Endothelial cell of umbilical vein (primary cell): ENCODE measurements at regions of chr7 and their contacts with region 1.

Region 1: GRCh38 chr7:135801045-135801693 is 52.6 kb upstream of the FAM180A start:
- DNase-seq: peak; percentile 66
- H3K4me3 ChIP-seq: no peak overlapping the region
- H3K27ac ChIP-seq: no peak overlapping the region
- H3K4me1 ChIP-seq: no peaks in the 10 kb centered on the region
- H3K27me3 ChIP-seq: peaks cover 0 to 3% of the 10 kb centered on the region in 2 experiments
- CTCF ChIP-seq: peak; percentile 63 to 70
- POLR2A ChIP-seq: no peak

Region 2: DNA sequence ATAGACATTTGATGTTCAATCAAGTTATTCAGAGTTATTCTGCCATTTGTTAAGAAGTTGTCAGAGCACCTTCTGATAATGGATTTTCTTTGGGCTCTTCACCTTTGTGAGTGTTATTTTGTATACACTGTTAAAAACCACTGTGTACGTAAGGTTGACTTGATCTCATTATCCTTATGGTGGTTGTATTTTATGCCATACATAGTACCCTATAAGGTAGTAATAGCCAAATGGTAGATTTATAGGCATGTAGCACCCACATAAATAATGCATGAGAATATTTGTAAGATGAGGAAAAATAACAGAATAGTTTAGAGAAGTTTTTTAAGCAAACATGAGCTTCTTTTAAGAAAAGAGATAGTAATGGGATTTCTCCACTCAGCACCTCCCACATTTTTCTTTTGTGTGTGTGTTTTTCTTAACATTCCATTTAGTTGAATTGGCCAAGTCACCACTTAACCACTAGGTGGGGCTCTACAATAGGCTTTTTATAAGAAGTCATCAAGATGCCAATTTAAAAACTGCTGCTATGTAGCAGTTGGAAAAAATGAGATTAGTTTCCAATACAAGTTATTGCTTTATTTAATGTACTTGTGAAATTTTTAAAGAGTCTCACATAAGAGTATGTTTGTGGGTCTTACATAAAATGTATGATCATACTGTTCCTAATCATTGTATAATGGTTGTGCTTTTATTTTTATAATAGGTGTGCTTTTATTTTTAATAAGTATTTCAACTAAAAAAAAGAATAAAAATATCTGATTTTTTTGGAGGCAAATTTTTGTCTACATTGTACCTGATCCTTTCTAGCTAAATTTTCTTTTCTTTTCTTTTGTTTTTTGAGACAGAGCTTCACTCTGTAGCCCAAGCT is 180.0 kb before region 1 on chr7:
- CTCF ChIA-PET with region 1: no interaction called
- POLR2A ChIA-PET with region 1: no interaction called
- dilution Hi-C with region 1: no loop called
- intact Hi-C with region 1: loop called (anchors 2 kb)
- DNase-seq: peak; percentile 82
- H3K4me3 ChIP-seq: no peak overlapping the region
- H3K27ac ChIP-seq: no peak overlapping the region
- H3K4me1 ChIP-seq: no peaks in the 10 kb centered on the region
- H3K27me3 ChIP-seq: no peaks in the 10 kb centered on the region
- CTCF ChIP-seq: peak; percentile 64 to 69
- POLR2A ChIP-seq: no peak

Region 3: GRCh38 chr7:135950972-135951371 is 149.8 kb after region 1 on chr7:
- CTCF ChIA-PET with region 1: no interaction called
- POLR2A ChIA-PET with region 1: no interaction called
- dilution Hi-C with region 1: no loop called
- intact Hi-C with region 1: no loop called
- DNase-seq: no peak
- H3K4me3 ChIP-seq: no peak overlapping the region
- H3K27ac ChIP-seq: no peak overlapping the region
- H3K4me1 ChIP-seq: no peaks in the 10 kb centered on the region
- H3K27me3 ChIP-seq: no peaks in the 10 kb centered on the region
- CTCF ChIP-seq: no peak
- POLR2A ChIP-seq: no peak

Region 4: GRCh38 chr7:136009488-136010079 is 208.4 kb after region 1 on chr7:
- CTCF ChIA-PET with region 1: interaction called, 53 read pairs
- POLR2A ChIA-PET with region 1: no interaction called
- dilution Hi-C with region 1: no loop called
- intact Hi-C with region 1: loop called (anchors 1 kb)
- DNase-seq: peak; percentile 62
- H3K4me3 ChIP-seq: no peak overlapping the region
- H3K27ac ChIP-seq: no peak overlapping the region
- H3K4me1 ChIP-seq: no peaks in the 10 kb centered on the region
- H3K27me3 ChIP-seq: peaks cover 0 to 5% of the 10 kb centered on the region in 2 experiments
- CTCF ChIP-seq: peak; percentile 29 to 40
- POLR2A ChIP-seq: no peak

Region 5: GRCh38 chr7:136114966-136115762 is 314.0 kb after region 1 on chr7:
- CTCF ChIA-PET with region 1: interaction called, 3 read pairs
- POLR2A ChIA-PET with region 1: no interaction called
- dilution Hi-C with region 1: no loop called
- intact Hi-C with region 1: loop called (anchors 1 kb)
- DNase-seq: peak; percentile 39
- H3K4me3 ChIP-seq: no peak overlapping the region
- H3K27ac ChIP-seq: no peak overlapping the region
- H3K4me1 ChIP-seq: no peaks in the 10 kb centered on the region
- H3K27me3 ChIP-seq: no peaks in the 10 kb centered on the region
- CTCF ChIP-seq: peak; percentile 74 to 78
- POLR2A ChIP-seq: no peak

Region 6: DNA sequence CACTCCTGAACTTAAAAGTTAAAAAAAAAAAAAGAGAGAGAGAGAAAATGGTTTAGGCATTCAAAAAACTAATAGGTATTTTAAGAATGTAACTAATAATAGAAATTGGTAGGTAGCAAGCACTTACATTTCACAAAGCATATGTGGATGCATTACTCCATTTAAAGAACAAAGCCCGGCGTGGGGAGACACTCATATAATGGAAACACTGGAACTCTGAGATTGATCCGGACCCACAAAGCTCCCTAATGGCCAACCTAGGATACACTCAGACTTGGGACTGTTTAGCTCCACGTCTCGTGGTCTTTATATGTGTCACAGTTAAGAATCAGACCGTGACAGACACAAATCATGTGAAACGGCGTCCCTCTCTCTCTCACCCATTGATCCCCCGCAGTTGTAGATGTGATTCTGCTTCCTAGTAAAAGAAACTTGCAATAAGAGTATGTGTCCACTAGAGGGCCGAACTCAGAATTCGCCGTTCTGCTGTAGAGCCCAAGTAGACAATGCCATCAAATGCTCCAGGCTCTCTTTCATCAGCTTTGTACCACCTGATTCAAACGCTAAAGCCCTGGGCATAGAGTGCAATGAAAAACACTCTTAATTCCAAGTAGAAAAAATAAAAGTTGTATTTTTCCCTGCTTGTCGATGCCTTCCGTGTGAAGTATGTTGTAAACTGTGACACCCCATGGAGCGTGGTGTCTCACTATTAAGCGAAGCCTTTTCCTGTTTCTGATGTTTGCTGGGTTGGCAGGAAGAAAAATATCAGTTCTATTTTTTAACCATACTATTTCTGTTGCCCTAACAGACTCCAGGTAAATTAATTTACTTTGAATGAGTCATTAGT is 605.0 kb after region 1 on chr7:
- CTCF ChIA-PET with region 1: no interaction called
- POLR2A ChIA-PET with region 1: no interaction called
- dilution Hi-C with region 1: no loop called
- intact Hi-C with region 1: loop called (anchors 5 kb)
- DNase-seq: peak; percentile 48
- H3K4me3 ChIP-seq: no peak overlapping the region
- H3K27ac ChIP-seq: no peak overlapping the region
- H3K4me1 ChIP-seq: no peaks in the 10 kb centered on the region
- H3K27me3 ChIP-seq: no peaks in the 10 kb centered on the region
- CTCF ChIP-seq: peak; percentile 55 to 67
- POLR2A ChIP-seq: no peak

Region 7: DNA sequence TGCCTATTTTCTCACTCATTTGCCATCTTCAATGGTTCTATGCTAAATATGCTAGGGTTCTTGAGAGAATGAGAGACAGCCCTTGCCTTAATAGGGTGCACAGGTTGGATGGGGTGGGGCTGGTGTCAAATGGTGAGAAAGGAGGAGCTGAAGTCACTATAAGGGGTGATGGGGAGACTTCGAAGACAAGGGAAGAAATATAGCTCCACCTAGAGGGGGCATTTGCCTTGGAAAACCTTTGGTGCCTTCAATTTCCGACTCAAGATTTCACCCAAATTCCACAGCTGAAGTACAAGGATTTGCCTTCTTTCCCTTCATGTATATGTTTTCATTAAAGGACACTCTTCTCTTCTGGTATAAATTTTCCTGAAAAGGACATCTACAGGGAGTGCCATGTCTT is 1536.7 kb after region 1 on chr7:
- CTCF ChIA-PET with region 1: no interaction called
- POLR2A ChIA-PET with region 1: no interaction called
- dilution Hi-C with region 1: no loop called
- intact Hi-C with region 1: no loop called
- DNase-seq: no peak
- H3K4me3 ChIP-seq: no peak overlapping the region
- H3K27ac ChIP-seq: no peak overlapping the region
- H3K4me1 ChIP-seq: no peaks in the 10 kb centered on the region
- H3K27me3 ChIP-seq: no peaks in the 10 kb centered on the region
- CTCF ChIP-seq: no peak
- POLR2A ChIP-seq: no peak